CD8-positive, alpha-beta T cell (primary cell): ENCODE measurements at regions of chr21 and their contacts with region 1.

Region 1: GRCh38 chr21:31731802-31732596 is at the start of gene SCAF4:
- DNase-seq: peak; percentile 58 to 89 (median 74)
- ATAC-seq: peak; percentile 87
- H3K4me3 ChIP-seq: peak within 1 kb of the TSS; percentile 73 to 93
- H3K4me3 Mint-ChIP-seq: peak within 1 kb of the TSS; percentile 90
- H3K27ac ChIP-seq: peak within 1 kb of the TSS; percentile 82 to 83
- H3K27ac Mint-ChIP-seq: peak within 1 kb of the TSS; percentile 84
- H3K4me1 ChIP-seq: peaks cover 50% of the 10 kb centered on the region
- H3K4me1 Mint-ChIP-seq: peaks cover 14% of the 10 kb centered on the region
- H3K27me3 ChIP-seq: no peaks in the 10 kb centered on the region
- H3K27me3 Mint-ChIP-seq: no peaks in the 10 kb centered on the region
- CTCF ChIP-seq: no peak
- total RNA-seq, gene SCAF4: 53.0 to 53.4 TPM

Region 2: DNA sequence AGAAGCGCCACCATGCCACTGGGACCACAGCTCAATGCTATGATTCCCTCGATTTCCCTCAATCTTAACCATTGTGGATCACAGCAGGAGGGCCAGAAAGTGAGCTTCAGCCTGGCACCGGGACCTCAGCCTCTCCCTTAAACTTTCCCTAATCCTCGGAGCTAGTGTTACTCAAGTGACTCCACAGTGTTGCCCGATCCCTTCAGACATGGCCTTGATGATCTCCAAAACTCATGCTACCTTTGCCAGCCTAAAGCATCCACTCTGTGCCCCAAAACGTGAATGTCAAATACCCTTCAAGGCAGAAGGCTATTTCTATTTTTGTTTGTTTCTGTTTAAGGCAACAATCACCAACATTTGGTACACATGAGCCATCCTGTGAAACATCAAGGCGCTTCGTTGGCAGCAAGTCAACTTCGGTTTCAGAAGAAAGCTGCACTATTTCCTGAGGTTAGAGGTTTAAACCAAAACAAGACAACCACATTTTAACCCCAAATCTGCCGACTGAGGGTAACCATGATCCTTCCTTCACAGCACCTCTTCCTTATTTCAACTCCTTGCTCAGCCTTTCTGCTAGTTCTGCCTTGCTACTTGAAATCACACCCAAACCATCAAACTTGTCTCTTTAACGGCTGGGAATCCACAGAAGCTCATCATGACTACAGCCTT is 599.3 kb before region 1 on chr21:
- CTCF ChIA-PET with region 1: no interaction called
- POLR2A ChIA-PET with region 1: no interaction called
- intact Hi-C with region 1: loop called in 1 of 2 experiments (anchors 10 kb)
- DNase-seq: peak; percentile 47 to 92 (median 77)
- ATAC-seq: peak; percentile 91
- H3K4me3 ChIP-seq: peak overlapping the region; percentile 10 to 42
- H3K4me3 Mint-ChIP-seq: peak overlapping the region; percentile 80
- H3K27ac ChIP-seq: no peak overlapping the region
- H3K27ac Mint-ChIP-seq: peak overlapping the region; percentile 58
- H3K4me1 ChIP-seq: peaks cover 35% of the 10 kb centered on the region
- H3K4me1 Mint-ChIP-seq: peaks cover 47% of the 10 kb centered on the region
- H3K27me3 ChIP-seq: peaks cover 0 to 4% of the 10 kb centered on the region in 2 experiments
- H3K27me3 Mint-ChIP-seq: peaks cover 3% of the 10 kb centered on the region
- CTCF ChIP-seq: no peak

Region 3: DNA sequence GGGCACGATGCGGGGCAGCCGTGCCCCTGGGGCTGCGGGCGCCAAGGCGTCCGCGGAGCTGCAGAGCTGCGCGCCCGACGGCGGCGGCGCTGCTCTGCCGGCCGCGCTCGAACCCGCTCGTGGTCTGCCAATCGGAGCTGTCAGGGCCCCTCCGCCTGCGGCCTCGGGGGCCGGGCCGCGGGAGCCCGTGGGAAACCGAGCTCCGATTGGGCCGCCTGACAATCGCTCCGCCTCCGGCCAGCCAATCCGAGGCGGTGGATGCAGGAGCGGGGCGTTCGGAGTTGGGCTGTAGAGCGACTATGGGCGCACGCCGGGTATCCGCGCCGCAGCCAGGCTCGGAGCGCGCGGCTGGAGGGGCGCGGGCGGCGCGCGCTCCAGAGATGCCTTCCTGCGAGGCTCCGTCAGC is 173.0 kb before region 1 on chr21:
- CTCF ChIA-PET with region 1: no interaction called
- POLR2A ChIA-PET with region 1: no interaction called
- intact Hi-C with region 1: loop called (anchors 5 kb)
- DNase-seq: peak; percentile 76 to 93 (median 89)
- ATAC-seq: peak; percentile 83
- H3K4me3 ChIP-seq: peak overlapping the region; percentile 51 to 54
- H3K4me3 Mint-ChIP-seq: peak overlapping the region; percentile 92
- H3K27ac ChIP-seq: peak overlapping the region in 1 of 2 experiments; percentile 7
- H3K27ac Mint-ChIP-seq: no peak overlapping the region
- H3K4me1 ChIP-seq: peaks cover 15% of the 10 kb centered on the region
- H3K4me1 Mint-ChIP-seq: peaks cover 25% of the 10 kb centered on the region
- H3K27me3 ChIP-seq: peaks cover 0 to 2% of the 10 kb centered on the region in 2 experiments
- H3K27me3 Mint-ChIP-seq: peaks cover 8% of the 10 kb centered on the region
- CTCF ChIP-seq: no peak

Region 4: DNA sequence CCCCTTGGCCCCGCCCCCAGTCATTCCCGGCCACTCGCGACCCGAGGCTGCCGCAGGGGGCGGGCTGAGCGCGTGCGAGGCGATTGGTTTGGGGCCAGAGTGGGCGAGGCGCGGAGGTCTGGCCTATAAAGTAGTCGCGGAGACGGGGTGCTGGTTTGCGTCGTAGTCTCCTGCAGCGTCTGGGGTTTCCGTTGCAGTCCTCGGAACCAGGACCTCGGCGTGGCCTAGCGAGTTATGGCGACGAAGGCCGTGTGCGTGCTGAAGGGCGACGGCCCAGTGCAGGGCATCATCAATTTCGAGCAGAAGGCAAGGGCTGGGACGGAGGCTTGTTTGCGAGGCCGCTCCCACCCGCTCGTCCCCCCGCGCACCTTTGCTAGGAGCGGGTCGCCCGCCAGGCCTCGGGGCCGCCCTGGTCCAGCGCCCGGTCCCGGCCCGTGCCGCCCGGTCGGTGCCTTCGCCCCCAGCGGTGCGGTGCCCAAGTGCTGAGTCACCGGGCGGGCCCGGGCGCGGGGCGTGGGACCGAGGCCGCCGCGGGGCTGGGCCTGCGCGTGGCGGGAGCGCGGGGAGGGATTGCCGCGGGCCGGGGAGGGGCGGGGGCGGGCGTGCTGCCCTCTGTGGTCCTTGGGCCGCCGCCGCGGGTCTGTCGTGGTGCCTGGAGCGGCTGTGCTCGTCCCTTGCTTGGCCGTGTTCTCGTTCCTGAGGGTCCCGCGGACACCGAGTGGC is 72.3 kb before region 1 on chr21 and contains the start of gene SOD1:
- CTCF ChIA-PET with region 1: no interaction called
- POLR2A ChIA-PET with region 1: interaction called, 3 read pairs
- intact Hi-C with region 1: loop called (anchors 1 to 2 kb)
- DNase-seq: peak; percentile 93 to 98 (median 96)
- ATAC-seq: peak; percentile 93
- H3K4me3 ChIP-seq: peak within 1 kb of the TSS; percentile 73 to 83
- H3K4me3 Mint-ChIP-seq: peak within 1 kb of the TSS; percentile 100
- H3K27ac ChIP-seq: peak within 1 kb of the TSS; percentile 77 to 87
- H3K27ac Mint-ChIP-seq: peak within 1 kb of the TSS; percentile 100
- H3K4me1 ChIP-seq: peaks cover 55% of the 10 kb centered on the region
- H3K4me1 Mint-ChIP-seq: peaks cover 72% of the 10 kb centered on the region
- H3K27me3 ChIP-seq: no peaks in the 10 kb centered on the region
- H3K27me3 Mint-ChIP-seq: no peaks in the 10 kb centered on the region
- CTCF ChIP-seq: no peak
- total RNA-seq, gene SOD1: 125 to 140 TPM

Region 5: DNA sequence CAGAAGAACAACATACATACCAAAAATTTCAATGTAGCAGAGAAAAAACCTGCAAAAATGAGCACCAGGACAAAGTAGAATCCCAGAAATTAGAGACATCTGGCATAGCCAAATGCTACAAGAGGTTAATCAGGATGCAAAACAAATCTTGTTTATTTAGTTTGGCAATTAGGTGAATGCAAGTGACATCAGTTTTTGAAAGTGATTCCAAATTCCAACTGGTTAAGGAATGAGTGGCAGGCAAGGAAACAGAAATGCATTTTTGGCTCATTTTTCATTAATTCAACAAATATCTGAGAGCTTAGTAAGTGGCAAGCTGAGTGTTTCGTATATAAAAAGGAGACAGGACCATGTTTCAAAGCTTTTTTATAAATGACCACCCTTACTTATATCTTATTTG is 21.4 kb before region 1 on chr21:
- CTCF ChIA-PET with region 1: no interaction called
- POLR2A ChIA-PET with region 1: no interaction called
- intact Hi-C with region 1: loop called in 1 of 2 experiments (anchors 2 kb)
- DNase-seq: no peak
- ATAC-seq: no peak
- H3K4me3 ChIP-seq: no peak overlapping the region
- H3K4me3 Mint-ChIP-seq: no peak overlapping the region
- H3K27ac ChIP-seq: no peak overlapping the region
- H3K27ac Mint-ChIP-seq: peak overlapping the region; percentile 53
- H3K4me1 ChIP-seq: peaks cover 28% of the 10 kb centered on the region
- H3K4me1 Mint-ChIP-seq: peaks cover 82% of the 10 kb centered on the region
- H3K27me3 ChIP-seq: no peaks in the 10 kb centered on the region
- H3K27me3 Mint-ChIP-seq: no peaks in the 10 kb centered on the region
- CTCF ChIP-seq: no peak

Region 6: DNA sequence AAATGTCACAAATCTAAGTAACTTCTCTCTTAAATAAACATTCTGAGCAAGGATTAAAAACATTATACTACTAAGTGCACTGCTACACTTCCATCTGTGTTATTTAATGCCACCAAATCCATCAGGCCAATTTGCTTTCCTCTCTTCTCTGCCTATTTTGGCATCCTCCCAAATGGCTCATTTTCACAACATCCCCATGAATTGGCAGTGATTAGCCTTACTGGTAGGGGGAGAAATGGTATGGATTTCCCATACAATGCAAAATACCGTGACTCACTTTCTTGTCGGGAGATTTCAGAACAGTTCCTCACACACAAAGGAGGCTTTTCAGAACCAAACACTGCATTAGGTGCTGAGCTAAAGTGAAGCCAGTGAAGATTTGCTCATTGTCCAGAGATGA is 351.2 kb after region 1 on chr21:
- CTCF ChIA-PET with region 1: no interaction called
- POLR2A ChIA-PET with region 1: no interaction called
- intact Hi-C with region 1: no loop called
- DNase-seq: no peak
- ATAC-seq: no peak
- H3K4me3 ChIP-seq: no peak overlapping the region
- H3K4me3 Mint-ChIP-seq: no peak overlapping the region
- H3K27ac ChIP-seq: no peak overlapping the region
- H3K27ac Mint-ChIP-seq: no peak overlapping the region
- H3K4me1 ChIP-seq: no peaks in the 10 kb centered on the region
- H3K4me1 Mint-ChIP-seq: no peaks in the 10 kb centered on the region
- H3K27me3 ChIP-seq: no peaks in the 10 kb centered on the region
- H3K27me3 Mint-ChIP-seq: no peaks in the 10 kb centered on the region
- CTCF ChIP-seq: no peak

Region 7: DNA sequence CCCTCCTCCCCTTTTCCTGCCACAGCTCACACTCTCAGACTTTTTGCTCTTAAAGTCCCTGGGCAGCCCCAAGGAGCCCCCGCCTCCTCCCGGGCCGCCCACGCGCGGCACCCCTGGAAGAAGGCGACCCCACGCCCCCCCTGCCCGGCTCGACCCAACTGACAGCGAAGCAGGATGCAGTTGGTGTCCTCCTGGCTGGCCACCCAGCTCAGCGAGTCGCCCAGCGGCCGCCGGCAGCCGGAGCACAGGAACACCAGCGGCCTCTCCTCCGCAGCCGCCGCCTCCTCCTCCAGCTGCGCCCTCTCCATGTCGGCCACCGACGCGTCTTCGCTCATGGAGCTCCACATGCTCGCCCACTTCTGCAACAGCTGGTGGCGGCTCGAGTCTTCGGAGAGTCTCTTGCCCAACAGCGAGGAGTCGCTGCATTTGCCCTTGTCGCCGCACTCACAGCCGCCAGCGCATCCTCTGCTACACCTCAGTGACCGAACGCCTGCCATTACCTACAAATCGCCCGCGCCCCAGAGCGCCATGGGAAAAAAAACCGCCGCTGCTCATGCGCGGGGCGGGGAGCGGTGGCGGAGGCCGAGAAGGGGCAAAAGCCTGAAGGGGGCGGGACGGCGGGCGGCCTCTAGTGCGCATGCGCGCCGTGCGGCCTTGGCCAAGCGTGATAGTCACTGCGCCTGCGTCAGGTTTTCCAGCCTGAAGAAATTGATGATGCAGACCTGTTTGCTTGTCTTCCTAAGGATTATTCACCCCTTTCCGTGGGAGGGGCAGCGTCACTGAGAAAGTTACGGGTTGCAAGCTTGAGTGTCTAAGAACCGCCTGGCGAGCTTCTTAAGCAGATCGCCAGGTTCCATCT is 546.7 kb after region 1 on chr21 and contains the start of gene MIS18A:
- CTCF ChIA-PET with region 1: no interaction called
- POLR2A ChIA-PET with region 1: no interaction called
- intact Hi-C with region 1: loop called (anchors 2 to 5 kb)
- DNase-seq: peak; percentile 95 to 99 (median 97)
- ATAC-seq: peak; percentile 95
- H3K4me3 ChIP-seq: peak within 1 kb of the TSS; percentile 67 to 74
- H3K4me3 Mint-ChIP-seq: peak within 1 kb of the TSS; percentile 99
- H3K27ac ChIP-seq: peak within 1 kb of the TSS; percentile 33 to 69
- H3K27ac Mint-ChIP-seq: peak within 1 kb of the TSS; percentile 92
- H3K4me1 ChIP-seq: peaks cover 16% of the 10 kb centered on the region
- H3K4me1 Mint-ChIP-seq: peaks cover 31% of the 10 kb centered on the region
- H3K27me3 ChIP-seq: no peaks in the 10 kb centered on the region
- H3K27me3 Mint-ChIP-seq: no peaks in the 10 kb centered on the region
- CTCF ChIP-seq: no peak
- total RNA-seq, gene MIS18A: 3.7 to 5.1 TPM

Region 8: DNA sequence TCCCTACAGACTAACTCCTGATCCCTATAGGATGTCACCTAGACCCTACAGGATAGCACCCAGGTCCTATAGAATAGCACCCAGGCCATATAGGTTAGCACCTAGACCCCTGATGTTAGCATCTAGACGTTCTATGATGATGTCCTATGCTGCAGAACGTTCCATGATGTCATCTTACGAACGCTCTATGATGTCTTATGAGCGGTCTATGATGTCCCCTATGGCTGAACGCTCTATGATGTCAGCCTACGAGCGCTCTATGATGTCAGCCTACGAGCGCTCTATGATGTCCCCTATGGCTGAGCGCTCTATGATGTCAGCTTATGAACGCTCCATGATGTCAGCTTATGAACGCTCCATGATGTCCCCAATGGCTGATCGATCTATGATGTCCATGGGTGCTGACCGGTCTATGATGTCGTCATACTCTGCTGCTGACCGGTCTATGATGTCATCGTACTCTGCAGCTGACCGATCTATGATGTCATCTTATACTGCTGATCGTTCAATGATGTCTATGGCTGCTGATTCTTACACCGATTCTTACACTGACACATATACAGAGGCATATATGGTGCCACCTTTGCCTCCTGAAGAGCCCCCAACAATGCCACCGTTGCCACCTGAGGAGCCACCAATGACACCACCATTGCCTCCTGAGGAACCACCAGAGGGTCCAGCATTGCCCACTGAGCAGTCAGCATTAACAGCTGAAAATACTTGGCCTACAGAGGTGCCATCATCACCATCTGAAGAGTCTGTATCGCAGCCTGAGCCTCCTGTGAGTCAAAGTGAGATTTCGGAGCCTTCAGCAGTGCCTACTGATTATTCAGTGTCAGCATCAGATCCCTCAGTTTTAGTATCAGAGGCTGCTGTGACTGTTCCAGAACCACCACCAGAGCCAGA is 1820.3 kb after region 1 on chr21:
- CTCF ChIA-PET with region 1: no interaction called
- POLR2A ChIA-PET with region 1: no interaction called
- intact Hi-C with region 1: loop called in 1 of 2 experiments (anchors 5 kb)
- DNase-seq: no peak
- ATAC-seq: peak; percentile 37
- H3K4me3 ChIP-seq: no peak overlapping the region
- H3K4me3 Mint-ChIP-seq: no peak overlapping the region
- H3K27ac ChIP-seq: no peak overlapping the region
- H3K27ac Mint-ChIP-seq: no peak overlapping the region
- H3K4me1 ChIP-seq: peaks cover 14% of the 10 kb centered on the region
- H3K4me1 Mint-ChIP-seq: peaks cover 66% of the 10 kb centered on the region
- H3K27me3 ChIP-seq: no peaks in the 10 kb centered on the region
- H3K27me3 Mint-ChIP-seq: no peaks in the 10 kb centered on the region
- CTCF ChIP-seq: no peak